ENCODE measurements at regions of chr11 and their contacts with region 1.

Region 1: DNA sequence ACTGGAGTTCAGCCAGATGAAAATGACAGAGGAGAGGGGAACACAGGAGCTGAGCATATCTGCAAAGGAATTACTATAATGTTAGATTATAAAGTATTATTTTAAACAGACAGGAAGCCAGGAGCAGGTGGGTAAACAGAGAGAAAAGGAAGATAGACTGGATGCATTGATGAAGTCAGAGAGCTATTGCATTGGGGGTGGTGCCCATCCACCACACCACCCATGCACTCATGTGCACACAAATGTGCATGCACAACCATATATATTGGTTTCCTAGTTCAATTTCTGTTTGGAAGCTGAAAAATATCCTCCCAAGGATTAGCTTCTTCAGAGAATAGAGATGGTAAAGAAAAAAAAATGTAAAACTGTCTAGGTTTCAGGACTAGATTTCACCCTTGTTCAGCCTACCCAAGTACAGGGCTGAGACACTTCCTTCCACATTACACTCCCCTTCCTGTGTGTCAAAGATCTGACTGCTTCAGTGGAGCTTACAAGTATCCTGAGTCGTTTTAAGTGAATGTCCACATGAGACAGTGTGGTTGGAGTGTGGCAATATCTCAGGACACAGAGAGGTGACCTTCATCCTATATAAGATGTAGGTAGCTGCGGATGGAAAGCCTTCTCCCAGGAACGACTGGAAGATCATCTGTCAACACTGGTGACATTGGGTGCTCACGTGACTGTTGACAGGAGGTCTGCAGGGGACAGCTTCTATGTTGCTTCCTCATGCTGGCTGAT is 12.2 kb upstream of the SMPD1 start:
- DNase-seq: no peak
- ATAC-seq: peak; percentile 53; the same call in 1 of the 2 replicates
- H3K4me3 ChIP-seq: no peak overlapping the region
- H3K27ac ChIP-seq: no peak overlapping the region
- H3K4me1 ChIP-seq: no peaks in the 10 kb centered on the region
- H3K27me3 ChIP-seq: no peaks in the 10 kb centered on the region
- CTCF ChIP-seq: no peak

Region 2: DNA sequence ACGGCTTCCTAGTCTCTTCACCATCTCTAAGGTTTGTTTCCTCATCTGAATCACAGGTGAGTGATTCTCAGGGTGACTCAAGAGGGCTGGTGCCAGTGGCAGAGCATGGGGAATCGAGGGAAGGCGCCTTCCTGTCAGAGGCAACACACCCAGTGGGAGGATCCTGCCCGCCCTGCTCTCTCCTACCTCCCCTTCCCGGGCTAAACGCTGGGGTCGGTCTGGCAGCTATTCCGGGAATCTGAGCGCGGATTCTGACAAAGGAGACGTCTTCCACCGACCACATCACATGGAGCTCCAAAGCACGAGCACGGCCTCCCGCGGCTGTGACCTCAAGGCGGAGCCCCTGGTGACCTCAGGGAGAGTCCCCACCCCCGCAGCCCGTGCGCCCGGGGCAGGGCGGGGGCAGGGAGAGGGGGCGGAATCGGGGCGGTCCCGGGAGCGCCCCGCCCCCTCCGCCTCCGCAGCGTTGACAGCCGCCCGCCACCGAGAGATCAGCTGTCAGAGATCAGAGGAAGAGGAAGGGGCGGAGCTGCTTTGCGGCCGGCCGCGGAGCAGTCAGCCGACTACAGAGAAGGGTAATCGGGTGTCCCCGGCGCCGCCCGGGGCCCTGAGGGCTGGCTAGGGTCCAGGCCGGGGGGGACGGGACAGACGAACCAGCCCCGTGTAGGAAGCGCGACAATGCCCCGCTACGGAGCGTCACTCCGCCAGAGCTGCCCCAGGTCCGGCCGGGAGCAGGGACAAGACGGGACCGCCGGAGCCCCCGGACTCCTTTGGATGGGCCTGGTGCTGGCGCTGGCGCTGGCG is 12.1 kb after region 1 on chr11 and contains the start of gene SMPD1:
- CTCF ChIA-PET with region 1: interaction called, 10 read pairs
- POLR2A ChIA-PET with region 1: interaction called, 9 read pairs
- intact Hi-C with region 1: no loop called
- DNase-seq: peak; percentile 94
- ATAC-seq: peak; percentile 90
- H3K4me3 ChIP-seq: peak within 1 kb of the TSS; percentile 72
- H3K27ac ChIP-seq: peak within 1 kb of the TSS; percentile 79
- H3K4me1 ChIP-seq: peaks cover 12% of the 10 kb centered on the region
- H3K27me3 ChIP-seq: no peaks in the 10 kb centered on the region
- CTCF ChIP-seq: no peak
- total RNA-seq, gene SMPD1: 12.1 and 12.9 TPM in 2 replicates

Region 3: GRCh38 chr11:6443269-6444003 is 65.4 kb after region 1 on chr11:
- CTCF ChIA-PET with region 1: interaction called, 92 read pairs
- POLR2A ChIA-PET with region 1: no interaction called
- intact Hi-C with region 1: loop called (anchors 1 kb)
- DNase-seq: peak; percentile 58
- ATAC-seq: peak; percentile 80
- H3K4me3 ChIP-seq: no peak overlapping the region
- H3K27ac ChIP-seq: no peak overlapping the region
- H3K4me1 ChIP-seq: no peaks in the 10 kb centered on the region
- H3K27me3 ChIP-seq: no peaks in the 10 kb centered on the region
- CTCF ChIP-seq: peak; percentile 84

Region 4: GRCh38 chr11:6505577-6506240 is 127.6 kb after region 1 on chr11:
- CTCF ChIA-PET with region 1: interaction called, 13 read pairs
- POLR2A ChIA-PET with region 1: no interaction called
- intact Hi-C with region 1: loop called (anchors 1 kb)
- DNase-seq: peak; percentile 58
- ATAC-seq: peak; percentile 85
- H3K4me3 ChIP-seq: no peak overlapping the region
- H3K27ac ChIP-seq: no peak overlapping the region
- H3K4me1 ChIP-seq: no peaks in the 10 kb centered on the region
- H3K27me3 ChIP-seq: no peaks in the 10 kb centered on the region
- CTCF ChIP-seq: peak; percentile 87

Region 5: DNA sequence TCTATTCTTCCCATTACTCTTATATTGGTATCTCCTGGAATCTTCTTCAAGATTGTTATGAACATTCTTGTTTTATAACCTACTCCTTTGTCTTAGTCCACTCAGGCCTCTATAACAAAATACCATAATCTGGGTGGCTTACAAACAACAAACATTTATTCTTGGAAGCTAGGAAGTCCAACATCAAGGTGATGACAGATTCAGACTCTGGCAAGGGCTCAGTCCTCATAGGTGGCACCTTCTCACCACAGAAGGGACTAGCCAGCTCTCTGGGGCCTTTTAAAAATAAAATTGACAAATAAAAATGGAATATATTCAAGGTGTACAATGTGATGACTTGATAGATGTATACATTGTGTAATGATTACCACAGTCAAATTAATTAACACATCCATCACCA is 138.8 kb after region 1 on chr11:
- CTCF ChIA-PET with region 1: no interaction called
- POLR2A ChIA-PET with region 1: no interaction called
- intact Hi-C with region 1: no loop called
- DNase-seq: no peak
- ATAC-seq: no peak
- H3K4me3 ChIP-seq: no peak overlapping the region
- H3K27ac ChIP-seq: no peak overlapping the region
- H3K4me1 ChIP-seq: no peaks in the 10 kb centered on the region
- H3K27me3 ChIP-seq: no peaks in the 10 kb centered on the region
- CTCF ChIP-seq: no peak

Region 6: DNA sequence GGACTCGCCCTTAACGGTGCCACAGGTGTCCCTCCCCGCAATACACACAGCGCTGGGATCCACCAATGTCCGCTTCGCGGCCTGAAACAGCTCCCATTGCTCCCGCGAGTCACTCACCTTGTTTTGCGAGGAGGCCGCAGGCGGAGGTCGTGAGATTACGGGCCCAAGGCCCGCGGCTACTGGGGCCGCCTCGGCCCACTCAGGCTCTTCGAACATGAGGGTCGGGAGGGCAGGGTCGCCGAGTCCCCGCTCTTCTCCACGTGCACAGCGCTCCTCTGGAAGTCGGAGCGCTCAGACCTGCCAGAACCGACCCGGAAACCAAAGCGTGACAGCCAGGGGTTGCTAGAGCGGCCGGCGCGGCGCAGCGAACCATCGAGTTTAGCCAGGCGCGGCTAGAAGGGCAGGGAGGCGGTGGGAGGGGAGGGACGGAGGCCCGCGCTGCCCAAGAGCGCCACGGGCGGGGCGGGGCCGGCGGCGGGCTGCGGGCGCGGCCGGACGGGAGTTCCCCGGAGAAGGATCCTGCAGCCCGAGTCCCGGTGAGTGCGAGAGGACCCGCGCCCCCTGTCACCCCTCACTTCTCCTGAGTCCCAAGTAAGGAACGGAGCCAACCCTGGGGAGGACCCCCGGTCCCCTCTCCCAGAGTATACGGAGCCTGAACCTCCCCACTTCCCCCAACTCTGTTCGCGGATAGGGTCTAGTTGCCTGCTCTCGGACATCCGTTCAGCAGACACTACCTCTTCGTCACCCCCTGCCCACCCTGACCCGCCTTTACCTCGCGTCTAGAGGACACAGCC is 225.4 kb after region 1 on chr11 and contains the starts of genes ILK and RRP8:
- CTCF ChIA-PET with region 1: no interaction called
- POLR2A ChIA-PET with region 1: no interaction called
- intact Hi-C with region 1: loop called (anchors 10 kb)
- DNase-seq: peak; percentile 89
- ATAC-seq: peak; percentile 80
- H3K4me3 ChIP-seq: peak within 1 kb of the TSS; percentile 93
- H3K27ac ChIP-seq: 0 out of 2 replicates have a peak within 1 kb of the TSS, but pooled peaks have one; percentile 5
- H3K4me1 ChIP-seq: peaks cover 38% of the 10 kb centered on the region
- H3K27me3 ChIP-seq: no peaks in the 10 kb centered on the region
- CTCF ChIP-seq: no peak
- total RNA-seq, gene ILK: 73.0 and 73.9 TPM in 2 replicates
- total RNA-seq, gene RRP8: 15.1 and 16.9 TPM in 2 replicates

Region 7: GRCh38 chr11:6705905-6706535 is 327.9 kb after region 1 on chr11:
- CTCF ChIA-PET with region 1: interaction called, 3 read pairs
- POLR2A ChIA-PET with region 1: no interaction called
- intact Hi-C with region 1: loop called (anchors 2 kb)
- DNase-seq: peak; percentile 64
- ATAC-seq: peak; percentile 18; the same call in 1 of the 2 replicates
- H3K4me3 ChIP-seq: no peak overlapping the region
- H3K27ac ChIP-seq: no peak overlapping the region
- H3K4me1 ChIP-seq: peaks cover 8% of the 10 kb centered on the region; the same call in 1 of the 2 replicates
- H3K27me3 ChIP-seq: no peaks in the 10 kb centered on the region
- CTCF ChIP-seq: peak; percentile 78

Region 8: GRCh38 chr11:6757373-6757967 is 379.4 kb after region 1 on chr11:
- CTCF ChIA-PET with region 1: interaction called, 5 read pairs
- POLR2A ChIA-PET with region 1: no interaction called
- intact Hi-C with region 1: loop called (anchors 1 kb)
- DNase-seq: peak; percentile 58
- ATAC-seq: peak; percentile 89
- H3K4me3 ChIP-seq: no peak overlapping the region
- H3K27ac ChIP-seq: no peak overlapping the region
- H3K4me1 ChIP-seq: no peaks in the 10 kb centered on the region
- H3K27me3 ChIP-seq: no peaks in the 10 kb centered on the region
- CTCF ChIP-seq: peak; percentile 62

Measured in PC-3 (cell line).